ENCODE measurements at regions of chr7 and their contacts with region 1.

Region 1: GRCh38 chr7:116984917-116985316 is 31.6 kb downstream of the ST7 start:
- DNase-seq: no peak
- ATAC-seq: peak in 2 of 4 donors; percentile 63 to 72
- H3K4me3 ChIP-seq: no peak overlapping the region
- H3K27ac ChIP-seq: no peak overlapping the region
- H3K4me1 ChIP-seq: peaks cover 10% of the 10 kb centered on the region
- H3K27me3 ChIP-seq: no peaks in the 10 kb centered on the region
- CTCF ChIP-seq: peak; percentile 76

Region 2: GRCh38 chr7:117119192-117119924 is 134.4 kb after region 1 on chr7:
- intact Hi-C with region 1: loop called (anchors 1 to 2 kb)
- DNase-seq: peak; percentile 77 to 86
- ATAC-seq: peak; percentile 50 to 82 (median 65)
- H3K4me3 ChIP-seq: no peak overlapping the region
- H3K27ac ChIP-seq: no peak overlapping the region
- H3K4me1 ChIP-seq: peaks cover 27% of the 10 kb centered on the region
- H3K27me3 ChIP-seq: no peaks in the 10 kb centered on the region
- CTCF ChIP-seq: peak; percentile 93

Measured in psoas muscle (tissue), 8 donors.